Ascending aorta (tissue), 2 donors: ENCODE measurements at regions of chrX and their contacts with region 1.

Region 1: GRCh38 chrX:110156167-110156754 is 153.3 kb downstream of the TMEM164 start:
- DNase-seq: no peak
- H3K4me3 ChIP-seq: no peak overlapping the region
- H3K27ac ChIP-seq: no peak overlapping the region
- H3K4me1 ChIP-seq: peaks cover 0 to 2% of the 10 kb centered on the region in 2 donors
- H3K27me3 ChIP-seq: no peaks in the 10 kb centered on the region
- CTCF ChIP-seq: peak in 2 of 3 experiments; percentile 48 to 54

Region 2: DNA sequence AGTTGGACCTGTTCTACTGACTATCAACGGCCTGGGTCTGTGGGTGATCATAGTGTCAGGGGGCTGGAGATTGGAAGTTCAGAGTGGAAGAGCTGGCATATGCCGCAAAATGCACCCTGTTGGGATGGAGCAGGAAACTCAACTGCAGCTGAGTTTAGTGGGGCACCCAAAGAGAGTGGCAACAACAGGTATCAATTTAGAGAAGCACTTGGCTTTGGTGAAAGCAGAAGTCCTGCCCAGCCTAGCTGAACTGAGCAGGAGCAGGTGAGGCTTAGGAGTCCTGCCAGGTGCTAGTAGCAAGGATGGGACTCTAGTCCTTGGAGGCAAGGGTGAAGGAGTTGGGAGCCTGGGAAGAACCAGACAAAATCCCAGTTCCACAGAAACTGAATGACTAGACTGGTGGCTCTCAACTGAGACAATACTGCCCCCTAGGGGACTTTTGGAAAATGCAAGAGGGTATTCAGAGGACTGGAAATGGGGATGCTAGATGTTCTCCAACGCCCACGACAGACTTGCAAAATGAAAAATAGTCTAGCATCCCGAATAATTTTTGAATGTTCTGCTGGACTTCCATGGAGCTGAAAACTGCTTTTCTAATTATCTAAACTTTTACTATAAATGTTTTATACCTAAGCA is 251.8 kb after region 1 on chrX:
- intact Hi-C with region 1: loop called (anchors 1 kb)
- DNase-seq: no peak
- H3K4me3 ChIP-seq: no peak overlapping the region
- H3K27ac ChIP-seq: no peak overlapping the region
- H3K4me1 ChIP-seq: no peaks in the 10 kb centered on the region
- H3K27me3 ChIP-seq: no peaks in the 10 kb centered on the region
- CTCF ChIP-seq: peak; percentile 46 to 69 (median 63)

Region 3: GRCh38 chrX:110847334-110847733 is 691.1 kb after region 1 on chrX:
- intact Hi-C with region 1: loop called (anchors 10 kb)
- DNase-seq: no peak
- H3K4me3 ChIP-seq: no peak overlapping the region
- H3K27ac ChIP-seq: no peak overlapping the region
- H3K4me1 ChIP-seq: no peaks in the 10 kb centered on the region
- H3K27me3 ChIP-seq: no peaks in the 10 kb centered on the region
- CTCF ChIP-seq: peak in 2 of 3 experiments; percentile 64 to 68